Calu3 (cell line): ENCODE measurements at regions of chr4 and their contacts with region 1.

Region 1: DNA sequence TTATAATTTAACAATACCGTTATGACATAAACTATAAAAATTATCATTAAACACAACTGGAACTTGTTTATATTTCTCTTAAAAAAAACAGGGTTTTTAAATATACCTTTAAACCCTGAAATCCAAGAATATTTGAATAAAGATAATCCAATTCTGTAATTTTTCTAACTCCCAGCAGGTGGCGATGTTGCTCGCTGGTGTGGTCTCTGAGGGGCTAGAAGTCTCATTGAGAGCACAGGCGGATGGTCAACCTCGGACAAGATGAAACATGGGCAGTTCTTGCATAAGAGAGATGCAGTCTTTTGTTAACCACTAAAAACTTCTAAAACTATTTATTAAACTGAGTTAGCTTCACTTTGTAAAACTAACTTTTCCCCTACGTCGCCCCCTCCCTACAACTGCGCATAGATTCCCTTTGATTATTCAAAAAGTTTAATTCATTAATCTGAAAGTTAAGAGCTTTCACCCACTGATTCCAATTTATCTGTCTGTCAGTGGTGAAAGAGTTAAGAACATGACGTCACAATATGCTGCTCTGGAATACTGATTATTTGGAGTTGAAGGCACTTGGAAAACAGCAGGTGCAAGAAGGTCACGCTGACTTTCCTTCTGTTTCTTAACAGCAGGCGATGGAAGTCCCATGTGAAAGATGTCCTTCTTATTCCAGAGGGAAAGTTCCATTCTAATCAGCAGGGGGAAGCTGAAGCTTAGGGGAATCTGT is 29.5 kb downstream of the DMP1 start:
- DNase-seq: peak; percentile 31
- H3K4me3 Mint-ChIP-seq: no peak overlapping the region
- H3K27ac Mint-ChIP-seq: no peak overlapping the region
- H3K4me1 Mint-ChIP-seq: no peaks in the 10 kb centered on the region
- H3K27me3 Mint-ChIP-seq: no peaks in the 10 kb centered on the region
- CTCF ChIP-seq: peak; percentile 76

Region 2: GRCh38 chr4:87543835-87544461 is 135.7 kb before region 1 on chr4:
- CTCF ChIA-PET with region 1: no interaction called
- intact Hi-C with region 1: loop called (anchors 1 kb)
- DNase-seq: peak; percentile 32
- H3K4me3 Mint-ChIP-seq: no peak overlapping the region
- H3K27ac Mint-ChIP-seq: no peak overlapping the region
- H3K4me1 Mint-ChIP-seq: no peaks in the 10 kb centered on the region
- H3K27me3 Mint-ChIP-seq: peaks cover 21% of the 10 kb centered on the region
- CTCF ChIP-seq: no peak